ENCODE measurements at regions of chr3 and their contacts with region 1.

Region 1: GRCh38 chr3:33602829-33603228 is 115.2 kb downstream of the CLASP2 start:
- DNase-seq: no peak
- ATAC-seq: no peak
- H3K4me3 ChIP-seq: no peak overlapping the region
- H3K27ac ChIP-seq: no peak overlapping the region
- H3K4me1 ChIP-seq: no peaks in the 10 kb centered on the region
- H3K27me3 ChIP-seq: no peaks in the 10 kb centered on the region
- CTCF ChIP-seq: no peak

Region 2: GRCh38 chr3:33557829-33558228 is 45.0 kb before region 1 on chr3:
- intact Hi-C with region 1: loop called in 1 of 2 experiments (anchors 10 kb)
- DNase-seq: no peak
- ATAC-seq: no peak
- H3K4me3 ChIP-seq: no peak overlapping the region
- H3K27ac ChIP-seq: no peak overlapping the region
- H3K4me1 ChIP-seq: no peaks in the 10 kb centered on the region
- H3K27me3 ChIP-seq: no peaks in the 10 kb centered on the region
- CTCF ChIP-seq: no peak

Measured in psoas muscle (tissue), 8 donors.